Common myeloid progenitor, CD34-positive (primary cell): ENCODE measurements at regions of chr2 and their contacts with region 1.

Region 1: DNA sequence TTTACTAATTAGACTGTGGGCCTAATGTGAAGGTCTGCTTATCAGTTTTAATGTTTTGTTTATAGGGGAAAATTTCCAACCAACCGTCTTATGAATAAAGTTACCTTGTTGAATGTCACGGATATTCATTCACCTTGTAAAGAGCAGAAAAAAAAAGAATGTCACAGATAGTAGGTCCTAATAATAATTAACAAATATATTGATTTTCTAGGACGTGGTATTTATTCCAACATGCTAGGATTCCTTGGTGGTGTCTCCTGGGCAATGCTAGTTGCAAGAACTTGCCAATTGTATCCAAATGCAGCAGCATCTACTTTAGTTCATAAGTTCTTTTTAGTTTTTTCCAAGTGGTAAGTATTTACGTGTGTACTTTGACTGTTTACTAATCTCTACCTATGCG is 23.4 kb downstream of the PAPOLG start:
- DNase-seq: no peak
- H3K4me3 ChIP-seq: no peak overlapping the region
- H3K27ac ChIP-seq: peak overlapping the region in 1 of 2 experiments; percentile 32
- H3K4me1 ChIP-seq: no peaks in the 10 kb centered on the region
- H3K27me3 ChIP-seq: no peaks in the 10 kb centered on the region

Region 2: DNA sequence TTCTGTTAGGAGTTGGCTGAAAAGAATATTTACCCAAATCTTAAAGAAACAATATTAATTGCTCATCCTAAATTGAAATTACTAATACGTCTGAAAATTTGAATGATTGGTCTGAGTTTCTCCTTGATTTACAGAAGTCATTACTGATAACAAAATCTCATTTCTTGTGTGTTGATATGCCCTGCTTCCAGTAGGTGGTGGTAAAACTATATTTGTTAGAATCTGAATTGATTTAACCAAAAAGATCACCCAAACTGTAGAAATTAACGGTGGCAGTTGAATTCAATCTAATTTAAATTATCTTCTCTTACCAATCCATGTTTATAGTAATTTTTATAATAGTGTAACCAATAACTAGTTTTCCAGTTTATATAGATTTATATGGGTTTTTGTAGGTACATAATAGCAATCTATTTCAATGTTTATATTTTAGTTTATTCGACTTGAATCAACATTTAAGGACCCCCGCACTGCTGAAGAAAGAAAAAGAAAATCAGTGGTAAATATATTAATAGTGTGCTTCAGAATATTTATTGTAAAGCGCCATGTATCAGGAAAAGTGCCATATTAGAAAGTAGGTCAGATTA is 14.9 kb after region 1 on chr2:
- CTCF ChIA-PET with region 1: interaction called, 11 read pairs
- POLR2A ChIA-PET with region 1: no interaction called
- DNase-seq: peak; percentile 46 to 74 (median 69)
- H3K4me3 ChIP-seq: no peak overlapping the region
- H3K27ac ChIP-seq: peak overlapping the region in 1 of 2 experiments; percentile 9
- H3K4me1 ChIP-seq: peaks cover 12 to 31% (median 16%) of the 10 kb centered on the region in 4 experiments
- H3K27me3 ChIP-seq: no peaks in the 10 kb centered on the region